Heart left ventricle (tissue), 16 donors: ENCODE measurements at regions of chr9 and their contacts with region 1.

Region 1: DNA sequence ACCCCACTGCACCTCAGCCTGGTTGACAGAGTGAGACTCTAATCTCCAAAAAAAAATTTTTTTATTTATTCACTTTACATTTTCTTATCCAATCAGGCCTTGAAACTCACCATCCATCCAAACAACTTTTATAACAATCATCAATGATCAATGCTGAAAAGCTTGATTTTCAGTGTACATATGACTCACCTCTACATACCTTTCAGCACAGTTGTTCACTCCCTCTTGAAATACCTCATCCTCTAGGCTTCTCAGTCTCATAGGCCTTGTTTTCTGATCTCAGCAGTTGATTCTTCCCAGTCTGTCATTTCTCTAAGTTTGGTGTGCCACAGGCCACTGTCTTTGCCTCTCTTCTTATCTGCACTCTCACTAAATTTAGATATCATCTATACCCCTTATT is 36.2 kb downstream of the GRIN3A start:
- DNase-seq: no peak
- ATAC-seq: no peak
- H3K4me3 ChIP-seq: no peak overlapping the region
- H3K27ac ChIP-seq: no peak overlapping the region
- H3K4me1 ChIP-seq: peaks cover 0 to 7% (median 0%) of the 10 kb centered on the region in 12 donors
- H3K27me3 ChIP-seq: peaks cover 0 to 4% (median 0%) of the 10 kb centered on the region in 9 donors
- CTCF ChIP-seq: no peak
- POLR2A ChIP-seq: no peak

Region 2: GRCh38 chr9:101751895-101752294 is 49.6 kb after region 1 on chr9:
- intact Hi-C with region 1: loop called in 1 of 10 experiments (anchors 5 kb)
- DNase-seq: no peak
- ATAC-seq: no peak
- H3K4me3 ChIP-seq: no peak overlapping the region
- H3K27ac ChIP-seq: no peak overlapping the region
- H3K4me1 ChIP-seq: no peaks in the 10 kb centered on the region
- H3K27me3 ChIP-seq: no peaks in the 10 kb centered on the region
- CTCF ChIP-seq: no peak
- POLR2A ChIP-seq: no peak